Spleen (tissue), 13 donors: ENCODE measurements at regions of chr1 and their contacts with region 1.

Region 1: DNA sequence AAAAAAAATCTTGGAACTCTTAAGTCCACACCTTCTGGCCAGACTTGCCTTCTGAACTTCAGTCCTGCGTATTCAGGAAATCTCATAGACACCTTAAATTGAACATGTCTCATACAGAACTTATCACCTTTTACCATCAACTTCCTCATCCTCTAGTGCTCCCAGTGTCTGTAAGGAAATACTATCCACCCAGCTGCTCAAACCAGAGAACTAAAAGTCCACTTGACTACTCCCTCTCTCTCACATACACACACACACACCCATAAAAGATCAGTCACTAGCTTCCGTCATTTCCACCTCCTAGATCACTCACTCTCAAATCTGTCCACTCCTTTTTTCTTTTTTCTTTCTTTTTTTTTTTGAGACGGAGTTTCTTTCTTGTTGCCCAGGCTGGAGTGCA is 10.9 kb upstream of the CAP1 start:
- DNase-seq: no peak
- H3K4me3 ChIP-seq: no peak overlapping the region
- H3K27ac ChIP-seq: no peak overlapping the region
- H3K4me1 ChIP-seq: peaks cover 0 to 42% (median 19%) of the 10 kb centered on the region in 6 donors
- H3K27me3 ChIP-seq: no peaks in the 10 kb centered on the region
- CTCF ChIP-seq: no peak
- POLR2A ChIP-seq: no peak

Region 2: GRCh38 chr1:39919545-39919944 is 110.1 kb before region 1 on chr1:
- intact Hi-C with region 1: loop called (anchors 10 kb)
- DNase-seq: no peak
- H3K4me3 ChIP-seq: no peak overlapping the region
- H3K27ac ChIP-seq: no peak overlapping the region
- H3K4me1 ChIP-seq: peaks cover 0 to 16% (median 0%) of the 10 kb centered on the region in 6 donors
- H3K27me3 ChIP-seq: peaks cover 0 to 10% (median 0%) of the 10 kb centered on the region in 7 donors
- CTCF ChIP-seq: peak in 10 of 11 experiments; percentile 20 to 73 (median 61)
- POLR2A ChIP-seq: no peak